ENCODE measurements at regions of chr16 and their contacts with region 1.

Region 1: GRCh38 chr16:87687126-87687910 is 78.5 kb downstream of the KLHDC4 start:
- DNase-seq: no peak
- H3K4me3 ChIP-seq: no peak overlapping the region
- H3K27ac ChIP-seq: no peak overlapping the region
- H3K4me1 ChIP-seq: no peaks in the 10 kb centered on the region
- H3K27me3 ChIP-seq: peaks cover 3 to 92% of the 10 kb centered on the region in 2 donors
- CTCF ChIP-seq: no peak
- POLR2A ChIP-seq: no peak

Region 2: DNA sequence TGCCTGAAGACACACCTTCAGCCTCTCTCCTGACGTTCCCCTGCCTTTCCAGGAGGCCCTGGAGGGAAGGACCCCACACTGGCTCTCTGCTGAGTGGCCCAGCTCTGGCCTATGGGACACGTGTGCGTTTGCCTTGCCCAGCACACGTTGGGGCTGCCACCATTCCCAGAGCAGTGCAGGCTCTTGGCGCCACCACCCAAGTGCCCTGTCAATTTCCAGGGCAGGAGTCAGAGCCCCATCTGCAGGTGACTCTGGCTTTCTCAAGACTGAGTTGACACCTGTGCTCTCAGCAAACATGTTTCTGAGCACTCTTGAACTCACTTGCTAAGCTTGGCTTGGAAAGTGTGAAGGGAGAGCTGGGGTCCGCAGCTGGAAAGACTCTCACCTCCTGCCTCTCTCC is 1793.1 kb before region 1 on chr16:
- intact Hi-C with region 1: loop called (anchors 5 kb)
- DNase-seq: no peak
- H3K4me3 ChIP-seq: no peak overlapping the region
- H3K27ac ChIP-seq: no peak overlapping the region
- H3K4me1 ChIP-seq: peaks cover 7 to 9% of the 10 kb centered on the region in 2 donors
- H3K27me3 ChIP-seq: peaks cover 3 to 46% of the 10 kb centered on the region in 2 donors
- CTCF ChIP-seq: no peak
- POLR2A ChIP-seq: no peak

Region 3: GRCh38 chr16:87043231-87044031 is 643.9 kb before region 1 on chr16:
- intact Hi-C with region 1: no loop called
- DNase-seq: no peak
- H3K4me3 ChIP-seq: no peak overlapping the region
- H3K27ac ChIP-seq: no peak overlapping the region
- H3K4me1 ChIP-seq: no peaks in the 10 kb centered on the region
- H3K27me3 ChIP-seq: peaks cover 0 to 50% of the 10 kb centered on the region in 2 donors
- CTCF ChIP-seq: no peak
- POLR2A ChIP-seq: no peak

Region 4: DNA sequence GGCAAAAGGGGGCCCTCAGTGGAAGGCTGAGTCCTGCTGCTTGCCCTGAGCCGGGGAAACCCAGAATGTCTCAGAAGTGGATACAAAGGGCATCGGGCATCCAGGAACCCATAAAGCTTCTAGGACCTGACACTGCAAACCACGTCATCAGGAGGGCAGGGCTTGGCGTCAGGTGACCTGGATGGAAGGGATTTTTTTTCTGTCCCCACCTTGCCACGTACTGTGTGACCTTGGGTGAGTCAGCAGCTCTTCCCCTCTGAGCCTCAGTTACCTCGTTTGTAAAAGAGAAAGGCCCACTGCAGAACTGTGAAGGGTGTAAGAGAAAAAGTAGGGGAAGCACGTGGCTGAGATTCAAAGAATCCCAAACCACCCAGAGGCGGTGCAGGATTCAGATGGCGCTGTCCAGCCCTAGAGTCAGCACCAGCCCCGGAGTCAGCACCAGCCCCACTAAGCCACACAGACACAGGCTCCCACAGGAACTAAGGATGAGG is 423.8 kb before region 1 on chr16:
- intact Hi-C with region 1: no loop called
- DNase-seq: no peak
- H3K4me3 ChIP-seq: no peak overlapping the region
- H3K27ac ChIP-seq: no peak overlapping the region
- H3K4me1 ChIP-seq: no peaks in the 10 kb centered on the region
- H3K27me3 ChIP-seq: no peaks in the 10 kb centered on the region
- CTCF ChIP-seq: no peak
- POLR2A ChIP-seq: no peak

Region 5: DNA sequence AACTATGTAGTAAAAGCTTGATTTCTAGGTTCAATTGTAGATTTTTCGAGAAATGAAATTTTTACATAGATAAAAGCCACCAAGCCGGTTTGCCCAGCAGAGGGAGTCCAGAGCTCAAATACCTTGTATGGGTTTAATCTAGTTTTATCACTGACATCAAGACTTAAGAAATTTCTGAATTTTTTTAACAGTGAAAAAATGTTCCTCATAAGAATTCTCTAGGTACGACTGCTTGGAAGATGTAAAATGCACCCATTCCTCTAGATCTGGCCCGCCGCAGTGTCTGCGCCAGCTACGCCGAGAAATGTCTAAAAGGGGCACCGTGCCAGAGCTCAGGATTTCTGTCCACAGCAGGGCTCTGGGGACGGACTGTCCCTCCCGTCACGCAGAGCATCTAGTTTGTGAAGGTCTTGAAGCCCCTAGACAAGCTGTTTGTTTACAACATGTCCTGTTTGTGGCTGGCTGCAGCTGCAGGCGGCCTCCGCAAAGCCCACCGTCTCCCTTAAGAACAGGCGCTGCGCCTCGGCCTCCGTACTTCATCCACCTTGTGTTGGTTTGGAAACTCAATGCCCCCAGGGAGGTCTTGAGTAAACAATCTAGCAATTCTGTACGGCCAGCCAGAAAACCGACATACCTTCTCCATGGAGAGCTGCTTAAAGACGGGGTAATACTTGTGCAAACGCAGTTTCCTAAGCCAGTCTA is 270.3 kb before region 1 on chr16:
- intact Hi-C with region 1: no loop called
- DNase-seq: no peak
- H3K4me3 ChIP-seq: no peak overlapping the region
- H3K27ac ChIP-seq: no peak overlapping the region
- H3K4me1 ChIP-seq: no peaks in the 10 kb centered on the region
- H3K27me3 ChIP-seq: no peaks in the 10 kb centered on the region
- CTCF ChIP-seq: peak in 2 of 3 donors; percentile 38 to 65
- POLR2A ChIP-seq: no peak

Region 6: GRCh38 chr16:87602821-87603683 is 84.3 kb before region 1 on chr16:
- intact Hi-C with region 1: no loop called
- DNase-seq: no peak
- H3K4me3 ChIP-seq: peak overlapping the region in 2 of 3 donors; percentile 5 to 43
- H3K27ac ChIP-seq: no peak overlapping the region
- H3K4me1 ChIP-seq: peaks cover 0 to 4% of the 10 kb centered on the region in 2 donors
- H3K27me3 ChIP-seq: peaks cover 2 to 91% of the 10 kb centered on the region in 2 donors
- CTCF ChIP-seq: no peak
- POLR2A ChIP-seq: no peak

Region 7: GRCh38 chr16:87740909-87741424 is 53.6 kb after region 1 on chr16:
- intact Hi-C with region 1: loop called (anchors 2 kb)
- DNase-seq: no peak
- H3K4me3 ChIP-seq: no peak overlapping the region
- H3K27ac ChIP-seq: no peak overlapping the region
- H3K4me1 ChIP-seq: no peaks in the 10 kb centered on the region
- H3K27me3 ChIP-seq: no peaks in the 10 kb centered on the region
- CTCF ChIP-seq: no peak
- POLR2A ChIP-seq: no peak